HepG2 (cell line): ENCODE measurements at regions of chr20 and their contacts with region 1.

Region 1: DNA sequence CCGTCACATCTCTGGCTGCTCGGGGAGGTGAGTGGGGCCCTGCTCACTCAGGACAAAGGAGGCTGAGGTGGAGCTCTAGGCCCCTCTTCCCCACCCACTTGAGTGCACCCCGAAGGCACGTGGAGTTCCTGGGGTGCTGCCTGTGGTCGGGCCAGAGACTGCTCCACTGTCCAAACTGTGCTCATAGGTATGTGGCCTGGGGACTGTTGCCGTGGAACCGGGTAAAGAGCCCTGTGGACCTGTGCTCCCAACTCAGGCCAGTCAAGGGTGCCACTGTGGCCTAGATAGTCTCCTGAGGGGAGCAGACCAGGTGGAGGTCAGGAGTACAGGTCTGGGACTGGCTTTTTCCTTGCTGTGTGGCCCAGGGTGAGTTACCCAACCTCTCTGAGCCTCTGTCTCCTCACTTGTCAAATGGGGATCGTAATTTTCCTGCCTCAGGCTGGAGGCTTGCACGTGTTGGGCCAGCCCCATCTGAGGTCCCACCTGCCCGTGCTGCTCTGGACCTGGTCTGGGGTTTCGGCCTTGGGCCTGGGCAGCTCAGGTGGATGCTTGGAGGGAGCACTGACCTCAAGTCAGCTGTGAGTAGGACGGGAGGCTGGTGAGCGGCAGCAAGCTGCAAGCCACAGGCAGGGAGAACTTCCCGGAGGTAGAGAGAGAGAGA is 12.4 kb upstream of the NPBWR2 start:
- DNase-seq: no peak
- ATAC-seq: peak; percentile 37
- H3K4me3 ChIP-seq: 0 out of 6 replicates have a peak overlapping the region, but pooled peaks of 1 of the 3 experiments have one; percentile 8
- H3K27ac ChIP-seq: no peak overlapping the region
- H3K4me1 ChIP-seq: peaks cover 11% of the 10 kb centered on the region
- H3K27me3 ChIP-seq: peaks cover 7 to 34% of the 10 kb centered on the region in 2 experiments
- CTCF ChIP-seq: no peak
- EP300 ChIP-seq: no peak
- POLR2A ChIP-seq: no peak
- RAD21 ChIP-seq: no peak

Region 2: GRCh38 chr20:64079273-64080012 is 40.4 kb before region 1 on chr20 and contains the start of gene RGS19:
- CTCF ChIA-PET with region 1: interaction called, 14 read pairs
- POLR2A ChIA-PET with region 1: interaction called, 8 read pairs
- in situ Hi-C with region 1: loop called (anchors 5 kb)
- intact Hi-C with region 1: loop called (anchors 1 kb)
- DNase-seq: peak; percentile 70
- ATAC-seq: peak; percentile 17
- H3K4me3 ChIP-seq: peak within 1 kb of the TSS; percentile 77 to 89 (median 85)
- H3K27ac ChIP-seq: peak within 1 kb of the TSS; percentile 35
- H3K4me1 ChIP-seq: peaks cover 59% of the 10 kb centered on the region
- H3K27me3 ChIP-seq: peaks cover 5 to 15% of the 10 kb centered on the region in 2 experiments; a peak in 4 of 5 replicates
- CTCF ChIP-seq: no peak
- EP300 ChIP-seq: no peak
- POLR2A ChIP-seq: no peak; a peak in 1 of 4 replicates
- RAD21 ChIP-seq: peak; percentile 56; the same call in 1 of the 2 replicates
- total RNA-seq, gene RGS19: 10.2 and 10.7 TPM in 2 replicates

Region 3: DNA sequence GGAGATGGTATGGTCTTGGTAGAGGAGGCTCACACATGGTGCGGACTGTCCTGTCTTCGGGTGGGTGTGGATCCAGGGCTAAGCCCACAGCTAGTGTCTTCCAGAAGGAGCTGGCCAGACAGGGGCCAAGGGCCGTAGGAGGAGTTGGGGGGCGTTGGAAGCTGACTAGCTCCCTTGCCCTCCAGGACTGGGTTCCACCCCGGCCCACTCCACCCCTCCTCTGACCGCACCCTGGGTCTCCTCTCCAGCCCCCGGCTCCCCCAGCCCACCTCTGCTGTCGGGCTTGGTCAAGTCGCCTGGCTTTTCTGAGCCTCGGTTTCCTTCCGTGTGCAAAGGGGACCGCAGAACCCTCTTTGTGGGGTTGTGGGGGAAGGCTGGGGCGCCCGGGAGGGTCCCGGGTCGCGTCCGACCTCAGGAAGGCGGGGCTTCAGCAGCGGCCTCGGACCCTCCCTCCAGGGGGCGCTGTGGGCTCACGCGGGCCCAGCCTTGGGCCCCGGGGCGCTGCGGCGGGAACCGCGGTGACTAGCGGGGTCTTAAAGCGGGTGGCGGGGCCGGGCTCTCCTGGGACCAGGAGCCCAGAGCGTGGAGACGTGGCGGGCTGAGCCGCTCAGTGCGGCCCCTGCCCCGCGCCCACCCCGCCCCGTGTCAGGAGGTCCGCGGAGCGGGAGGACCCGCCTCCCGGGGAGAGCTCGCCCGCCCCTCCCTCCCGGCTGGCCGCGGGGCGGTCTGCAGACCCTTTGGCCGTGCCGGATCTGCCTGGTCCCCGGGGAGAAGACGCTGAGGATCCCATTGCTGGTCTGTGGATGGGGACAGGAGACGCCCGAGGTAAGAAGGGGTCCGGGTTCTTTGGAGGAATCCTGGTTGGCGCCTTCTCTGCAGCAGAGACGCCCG is 17.8 kb before region 1 on chr20:
- CTCF ChIA-PET with region 1: interaction called, 21 read pairs
- POLR2A ChIA-PET with region 1: no interaction called
- in situ Hi-C with region 1: no loop called
- intact Hi-C with region 1: loop called (anchors 2 kb)
- DNase-seq: no peak
- ATAC-seq: peak; percentile 81
- H3K4me3 ChIP-seq: peak overlapping the region; percentile 48 to 69 (median 51); a peak in 4 of 6 replicates
- H3K27ac ChIP-seq: no peak overlapping the region
- H3K4me1 ChIP-seq: no peaks in the 10 kb centered on the region
- H3K27me3 ChIP-seq: peaks cover 45 to 84% of the 10 kb centered on the region in 2 experiments
- CTCF ChIP-seq: peak; percentile 92
- EP300 ChIP-seq: no peak
- POLR2A ChIP-seq: no peak
- RAD21 ChIP-seq: peak; percentile 91